GM10248 (cell line): ENCODE measurements at regions of chr13 and their contacts with region 1.

Region 1: GRCh38 chr13:21109168-21109567 is 47.8 kb upstream of the LATS2 start:
- DNase-seq: no peak
- CTCF ChIP-seq: no peak

Region 2: DNA sequence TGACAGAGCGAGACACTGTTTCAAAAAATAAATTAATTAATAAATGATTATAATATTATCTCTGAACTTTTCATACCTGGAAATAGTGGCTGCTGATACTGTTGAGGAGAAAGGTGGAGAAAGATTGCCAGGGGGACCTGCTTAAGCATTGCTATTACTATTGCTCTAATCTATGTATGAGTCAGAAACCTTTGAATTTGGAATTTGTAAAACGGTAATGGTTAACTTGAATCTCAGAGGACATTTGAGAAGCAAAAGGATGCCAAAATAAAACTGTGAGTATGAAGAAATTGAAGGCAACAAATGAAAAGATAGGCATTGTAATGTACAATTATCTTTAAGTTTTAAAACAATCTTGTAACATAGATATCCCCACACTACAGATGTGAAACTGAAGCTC is 72.5 kb after region 1 on chr13:
- CTCF ChIA-PET with region 1: interaction called, 12 read pairs
- POLR2A ChIA-PET with region 1: no interaction called
- DNase-seq: no peak
- CTCF ChIP-seq: no peak